Right ventricle myocardium inferior (tissue), 1 donor: ENCODE measurements at regions of chr6 and their contacts with region 1.

Region 1: DNA sequence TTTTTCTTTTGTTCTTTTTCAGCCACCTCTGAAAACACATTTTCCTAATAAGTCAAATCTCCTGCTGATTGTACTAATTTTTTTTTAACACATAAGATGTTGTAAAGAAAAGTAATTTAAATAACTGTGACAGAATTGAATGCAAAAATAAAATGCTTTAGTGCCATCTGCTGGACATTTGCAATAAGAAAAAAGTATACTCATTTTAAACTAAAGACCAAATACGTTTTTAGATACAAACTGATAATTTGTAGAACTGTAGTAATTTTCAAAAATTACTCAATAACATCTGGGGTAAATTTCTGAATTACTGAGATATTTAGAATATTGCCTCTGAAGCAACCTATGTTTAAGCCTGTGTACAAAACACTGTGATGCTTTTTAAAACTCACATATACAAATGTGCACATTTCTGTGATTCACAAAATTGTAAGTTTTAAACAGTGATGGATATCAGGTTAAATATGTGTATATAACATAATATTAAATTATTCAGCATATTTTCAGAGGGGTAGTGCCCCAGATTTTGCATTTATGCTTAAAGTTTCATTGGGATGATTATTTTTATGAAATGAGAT is 198.7 kb downstream of the RIMS1 start:
- DNase-seq: no peak
- ATAC-seq: no peak

Region 2: GRCh38 chr6:71537717-71538116 is 547.4 kb before region 1 on chr6:
- intact Hi-C with region 1: loop called (anchors 5 kb)
- DNase-seq: no peak
- ATAC-seq: no peak